ENCODE measurements at regions of chr6 and their contacts with region 1.

Region 1: GRCh38 chr6:17725083-17725482 is 18.4 kb upstream of the NUP153 start:
- DNase-seq: no peak
- H3K27ac ChIP-seq: no peak overlapping the region
- CTCF ChIP-seq: no peak

Region 2: DNA sequence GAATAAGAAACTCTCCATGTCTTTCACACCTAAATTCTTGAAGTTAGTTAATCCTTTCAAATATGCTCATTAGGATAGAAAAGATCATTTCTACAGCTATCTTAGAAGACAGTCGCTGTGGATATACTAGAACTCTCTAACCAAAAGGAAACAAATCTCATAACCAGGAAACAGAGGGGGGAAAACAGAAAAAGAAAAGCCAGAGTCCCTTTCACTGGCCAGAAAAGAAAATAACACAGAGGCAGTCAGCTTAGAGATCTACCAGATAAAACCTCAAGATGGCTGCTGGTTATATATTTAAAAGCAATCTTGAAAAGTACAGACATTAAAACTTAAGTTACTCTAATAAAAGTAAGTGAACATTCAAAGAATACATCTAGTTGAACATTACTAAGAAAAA is 37.9 kb before region 1 on chr6:
- CTCF ChIA-PET with region 1: no interaction called
- POLR2A ChIA-PET with region 1: interaction called, 12 read pairs
- DNase-seq: no peak
- H3K27ac ChIP-seq: no peak overlapping the region
- CTCF ChIP-seq: no peak

Measured in RWPE1 (cell line).